PC-9 (cell line): ENCODE measurements at regions of chr2 and their contacts with region 1.

Region 1: GRCh38 chr2:214126135-214126534 is 284.7 kb upstream of the VWC2L start:
- DNase-seq: no peak
- H3K4me3 ChIP-seq: no peak overlapping the region
- H3K27ac ChIP-seq: 0 out of 2 replicates have a peak overlapping the region, but pooled peaks have one; percentile 56
- H3K4me1 ChIP-seq: peaks cover 22% of the 10 kb centered on the region
- H3K27me3 ChIP-seq: no peaks in the 10 kb centered on the region
- CTCF ChIP-seq: no peak

Region 2: DNA sequence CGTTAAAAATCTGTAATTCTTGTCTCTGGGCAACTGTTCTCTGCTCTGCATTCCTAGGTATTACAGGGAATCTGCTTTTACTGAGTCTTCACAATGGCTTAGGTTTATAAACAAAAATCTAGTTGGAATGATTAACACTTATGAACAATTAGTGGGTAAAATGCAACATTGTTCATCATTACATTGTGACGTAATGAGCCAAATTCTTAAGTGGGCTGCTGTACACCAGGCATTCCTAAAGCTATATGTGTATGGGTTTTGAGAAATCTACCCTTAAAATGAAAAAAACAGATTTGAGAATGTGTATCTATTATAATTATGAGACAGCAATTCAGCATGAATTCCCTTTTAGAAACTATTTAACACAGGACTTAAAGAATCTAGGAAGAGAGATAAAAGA is 1546.0 kb before region 1 on chr2:
- CTCF ChIA-PET with region 1: no interaction called
- POLR2A ChIA-PET with region 1: interaction called, 12 read pairs
- intact Hi-C with region 1: no loop called
- DNase-seq: no peak
- H3K4me3 ChIP-seq: no peak overlapping the region
- H3K27ac ChIP-seq: no peak overlapping the region
- H3K4me1 ChIP-seq: no peaks in the 10 kb centered on the region
- H3K27me3 ChIP-seq: no peaks in the 10 kb centered on the region
- CTCF ChIP-seq: no peak

Region 3: DNA sequence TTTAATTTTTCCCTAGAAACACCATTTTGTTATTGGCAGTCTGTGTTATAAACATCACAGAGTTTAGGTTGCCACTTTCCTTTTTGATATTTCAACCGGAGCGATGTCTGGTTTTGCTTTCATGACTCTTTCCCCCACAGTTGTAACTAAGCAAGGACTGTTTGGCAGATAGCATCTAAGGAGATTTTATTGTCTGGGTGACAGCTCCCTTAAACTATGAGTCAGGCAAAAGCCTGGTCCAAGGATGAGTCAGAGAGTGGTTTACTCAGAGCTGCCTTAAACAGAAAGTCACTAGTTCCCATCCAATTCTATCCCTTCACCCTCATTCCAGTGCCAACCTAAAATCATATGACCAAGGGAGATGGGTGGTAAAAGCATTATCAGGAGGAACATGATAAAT is 56.9 kb before region 1 on chr2:
- CTCF ChIA-PET with region 1: no interaction called
- POLR2A ChIA-PET with region 1: no interaction called
- intact Hi-C with region 1: no loop called
- DNase-seq: peak; percentile 65 to 92
- H3K4me3 ChIP-seq: peak overlapping the region; percentile 15; the same call in 1 of the 2 replicates
- H3K27ac ChIP-seq: peak overlapping the region; percentile 13; the same call in 1 of the 2 replicates
- H3K4me1 ChIP-seq: peaks cover 11% of the 10 kb centered on the region
- H3K27me3 ChIP-seq: no peaks in the 10 kb centered on the region
- CTCF ChIP-seq: no peak